Activated CD4-positive, alpha-beta T cell treated with anti-CD3 and anti-CD28 coated beads, Interleukin-2, amount 10 ng/mL, durations not matched to agents 24 days and 14 days (primary cell): ENCODE measurements at regions of chr4 and their contacts with region 1.

Region 1: DNA sequence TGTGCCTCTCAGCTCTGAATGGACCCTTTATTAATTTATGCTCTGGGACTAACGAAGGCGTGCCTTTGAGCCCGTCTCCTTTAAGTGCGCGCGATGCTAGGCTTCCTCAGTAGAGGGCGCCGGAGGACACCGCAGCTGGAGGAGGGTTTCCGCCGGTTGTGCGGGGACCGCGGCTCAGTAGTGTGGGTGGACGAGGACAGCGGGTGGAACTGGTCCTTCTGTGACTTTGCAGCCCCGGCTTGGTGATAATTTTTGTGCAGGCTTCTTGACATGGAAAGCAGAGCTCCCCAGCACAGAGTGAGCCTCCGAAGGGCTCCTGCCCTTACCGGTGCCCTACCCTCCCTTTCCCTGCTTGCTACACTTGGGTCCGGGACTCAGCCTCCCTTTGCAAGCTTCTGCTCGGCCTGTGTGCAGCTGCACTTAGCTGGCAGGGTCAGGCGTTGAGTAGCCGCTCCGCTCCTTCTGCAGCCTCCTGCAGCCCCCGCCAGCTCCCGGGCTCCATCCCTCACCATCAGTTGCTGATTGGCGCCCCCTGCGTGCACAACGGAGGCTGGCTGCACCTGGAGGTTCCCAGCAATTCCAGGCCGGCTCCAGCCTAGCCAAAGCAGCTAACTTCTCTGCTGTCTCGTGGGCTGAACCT is 26.8 kb upstream of the BOD1L1 start:
- DNase-seq: peak; percentile 95
- H3K4me3 Mint-ChIP-seq: peak overlapping the region; percentile 84
- H3K27ac Mint-ChIP-seq: no peak overlapping the region
- H3K4me1 Mint-ChIP-seq: peaks cover 14% of the 10 kb centered on the region
- H3K27me3 Mint-ChIP-seq: peaks cover 6% of the 10 kb centered on the region

Region 2: DNA sequence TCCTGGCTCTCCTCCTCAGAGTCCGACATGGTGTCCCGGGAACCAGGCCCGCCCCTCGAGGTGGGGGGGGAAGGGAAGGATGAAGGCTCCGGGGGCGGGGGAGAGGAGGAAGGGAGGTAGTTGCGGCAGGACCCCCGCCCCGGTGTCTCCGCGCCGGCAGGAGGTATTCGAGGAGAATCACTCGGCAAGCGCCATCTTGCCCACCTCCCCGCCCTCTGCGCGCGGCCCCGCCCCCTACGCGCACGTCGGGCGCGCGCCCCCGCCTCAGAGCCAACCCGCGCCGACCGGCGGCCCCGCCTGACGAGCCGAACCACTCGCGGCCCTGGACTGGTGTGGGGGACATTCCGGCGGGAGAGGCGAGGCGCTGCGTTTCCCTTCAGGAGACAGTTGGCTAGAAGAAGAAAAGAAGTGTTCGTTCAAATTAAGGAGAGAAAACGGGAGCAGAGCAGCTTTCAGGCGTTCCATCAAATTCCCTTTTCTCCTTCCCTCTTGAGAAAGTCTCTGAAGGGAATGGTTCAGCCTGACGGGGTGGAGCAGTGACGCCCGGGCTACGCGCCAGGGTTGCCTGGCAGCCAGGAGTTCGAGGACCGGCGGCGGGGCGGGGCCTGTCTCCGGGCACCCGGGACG is 170.0 kb before region 1 on chr4 and contains the start of gene RAB28:
- intact Hi-C with region 1: loop called (anchors 10 kb)
- DNase-seq: peak; percentile 98
- H3K4me3 Mint-ChIP-seq: peak within 1 kb of the TSS; percentile 96
- H3K27ac Mint-ChIP-seq: peak within 1 kb of the TSS; percentile 100
- H3K4me1 Mint-ChIP-seq: peaks cover 21% of the 10 kb centered on the region
- H3K27me3 Mint-ChIP-seq: peaks cover 14% of the 10 kb centered on the region
- total RNA-seq, gene RAB28: 19.5 and 20.5 TPM in 2 replicates

Region 3: DNA sequence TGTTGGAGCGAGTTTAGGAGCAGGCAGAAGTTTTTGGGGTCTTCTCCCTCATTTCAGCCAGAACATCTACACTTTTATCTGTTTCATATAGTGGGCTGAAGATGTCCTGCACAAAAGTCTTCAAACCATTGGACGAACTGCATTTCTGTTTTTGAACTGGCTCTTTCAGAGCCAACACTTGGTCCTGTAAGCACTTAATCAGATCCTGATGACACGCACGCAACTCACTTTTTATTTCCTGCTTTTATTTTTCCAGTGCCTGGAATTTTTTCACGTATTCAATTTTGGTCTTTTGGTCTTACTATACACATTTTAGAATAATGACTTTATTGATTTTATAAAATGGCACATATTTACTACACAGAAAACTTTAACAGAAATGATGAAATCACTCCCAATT is 69.8 kb before region 1 on chr4:
- intact Hi-C with region 1: no loop called
- DNase-seq: no peak
- H3K4me3 Mint-ChIP-seq: no peak overlapping the region
- H3K27ac Mint-ChIP-seq: no peak overlapping the region
- H3K4me1 Mint-ChIP-seq: no peaks in the 10 kb centered on the region
- H3K27me3 Mint-ChIP-seq: no peaks in the 10 kb centered on the region

Region 4: DNA sequence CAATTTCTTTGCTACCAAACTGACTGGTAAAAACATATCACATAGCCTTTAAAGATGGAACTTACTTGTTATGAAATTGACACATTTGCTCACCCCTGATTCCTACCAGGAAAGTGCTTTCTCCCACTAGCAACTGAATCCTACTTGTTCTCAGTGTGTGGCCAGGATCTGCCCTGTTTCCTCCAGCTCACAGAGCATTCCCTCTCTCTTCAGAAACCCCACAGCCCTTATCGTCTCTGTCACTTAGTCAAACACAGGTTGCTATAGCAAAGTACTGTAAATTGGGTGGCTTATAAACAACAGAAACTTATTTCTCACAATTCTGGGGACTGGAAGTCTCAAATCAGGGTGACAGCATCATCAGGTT is 238.4 kb after region 1 on chr4:
- intact Hi-C with region 1: loop called (anchors 2 kb)
- DNase-seq: no peak
- H3K4me3 Mint-ChIP-seq: no peak overlapping the region
- H3K27ac Mint-ChIP-seq: peak overlapping the region; percentile 78
- H3K4me1 Mint-ChIP-seq: peaks cover 2% of the 10 kb centered on the region
- H3K27me3 Mint-ChIP-seq: no peaks in the 10 kb centered on the region

Region 5: GRCh38 chr4:14787894-14788293 is 1133.6 kb after region 1 on chr4:
- intact Hi-C with region 1: loop called (anchors 2 kb)
- DNase-seq: peak; percentile 57
- H3K4me3 Mint-ChIP-seq: no peak overlapping the region
- H3K27ac Mint-ChIP-seq: no peak overlapping the region
- H3K4me1 Mint-ChIP-seq: peaks cover 30% of the 10 kb centered on the region
- H3K27me3 Mint-ChIP-seq: no peaks in the 10 kb centered on the region

Region 6: DNA sequence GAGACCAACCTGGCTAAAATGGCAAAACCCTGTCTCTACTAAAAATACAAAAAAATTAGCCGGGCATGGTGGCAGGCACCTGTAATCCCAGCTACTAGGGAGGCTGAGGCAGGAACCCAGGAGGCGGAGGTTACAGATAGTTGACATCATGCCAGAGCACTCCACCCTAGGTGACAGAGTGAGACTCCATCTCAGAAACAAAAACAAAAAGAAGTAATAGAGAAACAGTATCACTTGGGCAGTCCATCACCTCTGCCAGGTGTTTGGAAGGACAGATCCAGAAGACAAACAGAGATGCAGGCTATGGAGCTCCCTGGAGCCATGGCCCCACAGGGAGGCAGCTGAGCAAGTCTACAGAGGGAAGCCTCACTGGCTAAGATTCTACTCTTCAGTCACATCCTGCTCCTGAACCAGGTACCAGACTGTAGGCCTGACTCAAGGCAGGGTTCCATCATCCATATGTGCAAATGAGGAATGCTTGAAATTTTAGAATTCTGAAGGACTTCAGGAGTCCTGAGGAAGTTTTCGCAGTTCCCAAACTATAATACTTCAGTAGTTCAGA is 1266.6 kb after region 1 on chr4:
- intact Hi-C with region 1: loop called (anchors 10 kb)
- DNase-seq: peak; percentile 73
- H3K4me3 Mint-ChIP-seq: no peak overlapping the region
- H3K27ac Mint-ChIP-seq: no peak overlapping the region
- H3K4me1 Mint-ChIP-seq: no peaks in the 10 kb centered on the region
- H3K27me3 Mint-ChIP-seq: peaks cover 3% of the 10 kb centered on the region

Region 7: GRCh38 chr4:15396157-15396800 is 1742.0 kb after region 1 on chr4:
- intact Hi-C with region 1: loop called (anchors 10 kb)
- DNase-seq: peak; percentile 87
- H3K4me3 Mint-ChIP-seq: no peak overlapping the region
- H3K27ac Mint-ChIP-seq: no peak overlapping the region
- H3K4me1 Mint-ChIP-seq: peaks cover 9% of the 10 kb centered on the region
- H3K27me3 Mint-ChIP-seq: no peaks in the 10 kb centered on the region

Region 8: DNA sequence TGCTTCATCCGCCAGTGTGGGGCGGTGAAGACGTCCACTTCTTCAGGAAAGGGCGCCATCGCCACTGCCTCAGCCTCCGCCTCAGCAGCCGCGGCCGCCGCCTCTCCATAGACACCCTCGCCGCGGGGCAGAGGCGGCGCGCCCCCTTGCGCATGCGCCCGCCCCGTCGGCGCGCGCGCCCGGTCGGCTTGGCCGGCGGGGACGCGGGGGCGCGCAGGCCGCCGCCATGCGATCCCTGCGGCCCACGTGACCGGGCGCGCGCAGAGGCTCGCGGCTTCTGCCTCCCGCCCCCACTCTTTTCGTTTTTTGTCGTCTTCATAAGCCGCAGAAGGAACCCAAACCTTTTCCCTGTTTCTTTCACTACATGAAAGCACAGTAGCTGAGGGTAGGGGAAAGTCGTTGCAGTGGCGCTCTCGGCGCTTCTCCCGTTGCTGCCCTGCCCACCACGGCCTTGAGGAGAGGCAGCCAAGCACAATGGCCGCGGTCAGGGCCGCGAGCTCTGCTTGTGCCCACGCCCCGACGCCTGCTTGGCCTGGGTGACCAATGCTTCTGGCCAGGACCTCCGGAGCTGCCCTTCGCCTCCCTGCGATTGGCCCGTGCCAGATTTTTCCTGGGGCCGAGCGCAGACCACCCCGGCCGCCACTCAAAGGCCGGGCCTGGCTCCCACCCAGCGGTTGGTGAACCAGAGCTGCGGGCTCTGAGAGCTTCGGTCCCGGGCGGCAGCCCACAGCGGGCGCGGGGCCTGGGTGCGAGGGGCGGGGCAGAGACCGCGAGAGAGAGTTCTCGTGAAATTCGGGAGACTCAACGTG is 2001.2 kb after region 1 on chr4 and contains the start of gene FBXL5:
- intact Hi-C with region 1: loop called (anchors 10 kb)
- DNase-seq: peak; percentile 96
- H3K4me3 Mint-ChIP-seq: peak within 1 kb of the TSS; percentile 99
- H3K27ac Mint-ChIP-seq: peak within 1 kb of the TSS; percentile 96
- H3K4me1 Mint-ChIP-seq: peaks cover 55% of the 10 kb centered on the region
- H3K27me3 Mint-ChIP-seq: peaks cover 1% of the 10 kb centered on the region
- total RNA-seq, gene FBXL5: 28.9 and 31.2 TPM in 2 replicates